ENCODE measurements at regions of chrX and their contacts with region 1.

Region 1: GRCh38 chrX:72540318-72540717 is 32.3 kb downstream of the HDAC8 start:
- DNase-seq: no peak
- ATAC-seq: peak; percentile 41 to 55
- H3K4me3 ChIP-seq: no peak overlapping the region
- H3K27ac ChIP-seq: no peak overlapping the region
- H3K4me1 ChIP-seq: no peaks in the 10 kb centered on the region
- H3K27me3 ChIP-seq: no peaks in the 10 kb centered on the region

Region 2: DNA sequence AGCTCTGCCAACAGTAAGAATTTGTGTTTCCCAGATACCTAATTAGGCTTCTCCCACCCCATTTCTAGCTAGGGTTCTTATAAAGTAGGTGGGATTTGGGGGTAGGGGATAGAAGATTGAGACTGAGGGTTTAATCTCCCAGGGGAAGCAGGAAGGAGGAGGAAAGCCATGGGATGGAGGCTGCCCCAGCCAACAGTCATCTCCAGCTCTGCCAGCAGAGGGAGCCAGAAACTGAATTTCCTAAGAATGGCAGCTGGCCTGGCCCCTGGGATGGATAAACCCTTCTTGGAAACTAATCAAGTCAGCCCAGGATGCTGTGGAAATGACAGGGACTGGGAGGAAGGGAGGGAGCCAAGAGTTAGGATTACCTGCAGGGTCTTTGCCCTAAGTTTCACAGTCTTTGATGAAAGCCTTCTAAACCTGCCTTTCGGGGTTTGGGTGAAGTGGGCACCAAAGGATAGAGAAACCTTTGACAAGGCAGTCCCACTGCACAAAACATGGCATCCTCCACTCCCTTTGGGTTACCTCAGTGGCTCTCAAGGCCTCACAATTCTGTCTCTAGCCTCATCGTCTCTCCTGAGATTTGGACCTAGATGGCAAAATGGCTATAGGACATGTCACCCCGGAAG is 294.7 kb before region 1 on chrX:
- intact Hi-C with region 1: loop called in 1 of 4 experiments (anchors 10 kb)
- DNase-seq: peak; percentile 38 to 67 (median 64)
- ATAC-seq: peak; percentile 40 to 64
- H3K4me3 ChIP-seq: no peak overlapping the region
- H3K27ac ChIP-seq: no peak overlapping the region
- H3K4me1 ChIP-seq: no peaks in the 10 kb centered on the region
- H3K27me3 ChIP-seq: no peaks in the 10 kb centered on the region

Region 3: DNA sequence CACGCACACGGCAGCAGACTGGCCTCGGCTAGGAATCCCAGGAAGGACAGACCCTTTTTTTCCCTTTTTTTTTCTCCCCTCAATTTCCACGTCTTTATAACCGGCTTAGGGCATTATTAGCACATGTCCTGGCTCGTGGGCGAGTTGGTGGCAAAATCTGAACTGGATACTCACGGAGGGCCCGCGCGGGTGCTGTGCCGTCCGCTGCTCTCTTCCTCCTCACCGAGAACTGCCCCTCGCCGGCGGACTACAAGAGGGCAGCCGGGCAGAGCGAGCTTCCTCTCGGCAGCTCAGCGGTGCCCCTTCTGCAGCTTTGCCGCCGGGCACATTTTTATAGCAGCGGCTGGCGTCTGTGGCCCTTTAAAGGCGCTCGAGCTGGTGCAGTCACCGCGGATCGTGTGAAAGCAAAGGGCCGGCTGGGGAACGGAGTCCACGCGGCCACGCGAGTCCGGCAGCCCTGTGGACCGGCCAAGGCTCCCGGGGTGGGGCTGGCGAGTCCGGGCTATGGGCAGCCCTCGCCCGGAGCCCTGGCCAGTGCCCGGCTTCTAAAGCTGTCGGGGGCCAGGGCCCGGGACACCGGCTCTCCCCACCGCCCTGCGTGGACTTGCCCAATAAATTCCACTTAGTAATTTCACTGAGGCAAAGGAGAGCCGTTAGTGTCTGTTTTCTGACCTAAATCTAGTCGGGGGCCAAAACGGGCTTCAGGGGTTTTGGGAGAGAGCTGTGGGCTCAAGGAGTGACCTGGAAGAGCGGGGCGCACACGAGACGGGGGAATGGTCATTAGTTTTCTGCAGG is 233.3 kb before region 1 on chrX:
- intact Hi-C with region 1: loop called in 1 of 4 experiments (anchors 10 kb)
- DNase-seq: peak; percentile 63 to 82 (median 72)
- ATAC-seq: peak; percentile 76 to 80
- H3K4me3 ChIP-seq: peak overlapping the region; percentile 80
- H3K27ac ChIP-seq: no peak overlapping the region
- H3K4me1 ChIP-seq: peaks cover 2% of the 10 kb centered on the region
- H3K27me3 ChIP-seq: no peaks in the 10 kb centered on the region